H1 (cell line): ENCODE measurements at regions of chr10 and their contacts with region 1.

Region 1: GRCh38 chr10:79608505-79609375 is 2.0 kb upstream of the SFTPA1 start:
- DNase-seq: peak; percentile 49 to 80
- H3K4me3 ChIP-seq: no peak overlapping the region
- H3K27ac ChIP-seq: no peak overlapping the region
- H3K4me1 ChIP-seq: no peaks in the 10 kb centered on the region
- H3K27me3 ChIP-seq: peaks cover 0 to 4% (median 2%) of the 10 kb centered on the region in 4 experiments; a peak in 2 of 7 replicates
- CTCF ChIP-seq: peak; percentile 81 to 98 (median 91)
- EP300 ChIP-seq: no peak
- POLR2A ChIP-seq: no peak
- RAD21 ChIP-seq: peak; percentile 91 to 93

Region 2: GRCh38 chr10:79358783-79359182 is 250.0 kb before region 1 on chr10:
- CTCF ChIA-PET with region 1: no interaction called
- POLR2A ChIA-PET with region 1: no interaction called
- DNase-seq: peak in 1 of 2 experiments; percentile 28
- H3K4me3 ChIP-seq: no peak overlapping the region
- H3K27ac ChIP-seq: no peak overlapping the region
- H3K4me1 ChIP-seq: no peaks in the 10 kb centered on the region
- H3K27me3 ChIP-seq: no peaks in the 10 kb centered on the region
- CTCF ChIP-seq: no peak
- EP300 ChIP-seq: no peak
- POLR2A ChIP-seq: no peak
- RAD21 ChIP-seq: no peak

Region 3: DNA sequence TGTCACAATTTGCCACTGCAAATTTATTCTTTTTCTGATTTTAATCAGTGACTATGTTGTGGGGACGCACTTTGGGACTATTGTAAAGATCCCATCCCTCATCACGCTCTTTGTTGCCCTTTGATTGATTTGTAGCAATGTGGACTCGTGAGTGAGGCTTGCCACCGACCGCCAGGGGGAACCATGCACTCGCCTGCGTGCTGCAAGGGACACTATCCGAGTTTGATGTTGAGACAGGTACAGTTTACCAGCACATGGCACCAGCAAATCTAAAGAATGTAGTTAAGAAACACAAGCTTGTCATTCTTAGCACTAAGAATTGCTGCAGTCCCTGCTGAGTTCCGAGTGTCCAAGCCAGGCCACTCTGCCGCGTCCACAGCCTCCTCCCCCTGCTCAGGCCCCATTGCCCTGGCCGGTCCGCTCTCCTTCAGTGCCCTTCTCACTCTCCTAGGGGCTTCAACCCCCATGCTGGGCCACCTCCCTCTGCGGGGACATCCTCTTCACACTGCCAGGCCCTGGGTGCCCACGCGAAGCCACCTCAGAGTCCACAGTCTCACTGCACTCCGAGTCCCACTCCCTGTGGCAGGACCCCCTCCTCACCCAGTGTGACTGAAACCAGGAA is 46.5 kb before region 1 on chr10:
- CTCF ChIA-PET with region 1: interaction called, 10 read pairs
- POLR2A ChIA-PET with region 1: no interaction called
- DNase-seq: peak; percentile 34 to 84
- H3K4me3 ChIP-seq: peak overlapping the region in 1 of 4 experiments; percentile 27; a peak in 1 of 8 replicates
- H3K27ac ChIP-seq: no peak overlapping the region
- H3K4me1 ChIP-seq: peaks cover 0 to 2% (median 0%) of the 10 kb centered on the region in 4 experiments; a peak in 1 of 7 replicates
- H3K27me3 ChIP-seq: peaks cover 0 to 3% (median 1%) of the 10 kb centered on the region in 4 experiments; a peak in 2 of 7 replicates
- CTCF ChIP-seq: peak; percentile 90 to 96 (median 95)
- EP300 ChIP-seq: no peak
- POLR2A ChIP-seq: no peak
- RAD21 ChIP-seq: peak; percentile 94